CD8-positive, alpha-beta T cell (primary cell): ENCODE measurements at regions of chr12 and their contacts with region 1.

Region 1: DNA sequence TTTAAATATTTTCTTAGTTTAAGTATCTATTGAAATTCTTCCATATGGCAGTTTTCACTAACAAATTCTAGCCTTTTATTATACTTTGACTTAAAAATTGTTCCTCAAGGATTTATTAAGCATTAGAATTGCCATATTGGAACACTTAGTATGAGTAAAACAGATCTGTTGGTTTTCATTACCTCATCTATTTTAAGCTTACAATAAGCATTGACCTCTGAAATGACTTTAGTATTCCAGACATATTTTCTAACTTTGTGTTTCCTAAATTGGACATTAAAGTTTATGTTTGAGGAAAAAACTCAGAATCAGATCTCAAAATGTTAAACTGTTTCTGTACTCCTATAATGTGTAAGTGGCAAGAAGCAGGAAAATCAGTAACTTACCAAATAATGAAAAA is 48.4 kb downstream of the CSRP2 start:
- DNase-seq: no peak
- ATAC-seq: no peak
- H3K4me3 ChIP-seq: no peak overlapping the region
- H3K4me3 Mint-ChIP-seq: no peak overlapping the region
- H3K27ac ChIP-seq: no peak overlapping the region
- H3K27ac Mint-ChIP-seq: no peak overlapping the region
- H3K4me1 ChIP-seq: no peaks in the 10 kb centered on the region
- H3K4me1 Mint-ChIP-seq: no peaks in the 10 kb centered on the region
- H3K27me3 ChIP-seq: no peaks in the 10 kb centered on the region
- H3K27me3 Mint-ChIP-seq: no peaks in the 10 kb centered on the region
- CTCF ChIP-seq: no peak

Region 2: GRCh38 chr12:76813972-76814371 is 16.5 kb before region 1 on chr12:
- CTCF ChIA-PET with region 1: no interaction called
- POLR2A ChIA-PET with region 1: no interaction called
- intact Hi-C with region 1: loop called in 1 of 2 experiments (anchors 2 kb)
- DNase-seq: no peak
- ATAC-seq: no peak
- H3K4me3 ChIP-seq: no peak overlapping the region
- H3K4me3 Mint-ChIP-seq: no peak overlapping the region
- H3K27ac ChIP-seq: no peak overlapping the region
- H3K27ac Mint-ChIP-seq: no peak overlapping the region
- H3K4me1 ChIP-seq: no peaks in the 10 kb centered on the region
- H3K4me1 Mint-ChIP-seq: no peaks in the 10 kb centered on the region
- H3K27me3 ChIP-seq: no peaks in the 10 kb centered on the region
- H3K27me3 Mint-ChIP-seq: no peaks in the 10 kb centered on the region
- CTCF ChIP-seq: no peak

Region 3: DNA sequence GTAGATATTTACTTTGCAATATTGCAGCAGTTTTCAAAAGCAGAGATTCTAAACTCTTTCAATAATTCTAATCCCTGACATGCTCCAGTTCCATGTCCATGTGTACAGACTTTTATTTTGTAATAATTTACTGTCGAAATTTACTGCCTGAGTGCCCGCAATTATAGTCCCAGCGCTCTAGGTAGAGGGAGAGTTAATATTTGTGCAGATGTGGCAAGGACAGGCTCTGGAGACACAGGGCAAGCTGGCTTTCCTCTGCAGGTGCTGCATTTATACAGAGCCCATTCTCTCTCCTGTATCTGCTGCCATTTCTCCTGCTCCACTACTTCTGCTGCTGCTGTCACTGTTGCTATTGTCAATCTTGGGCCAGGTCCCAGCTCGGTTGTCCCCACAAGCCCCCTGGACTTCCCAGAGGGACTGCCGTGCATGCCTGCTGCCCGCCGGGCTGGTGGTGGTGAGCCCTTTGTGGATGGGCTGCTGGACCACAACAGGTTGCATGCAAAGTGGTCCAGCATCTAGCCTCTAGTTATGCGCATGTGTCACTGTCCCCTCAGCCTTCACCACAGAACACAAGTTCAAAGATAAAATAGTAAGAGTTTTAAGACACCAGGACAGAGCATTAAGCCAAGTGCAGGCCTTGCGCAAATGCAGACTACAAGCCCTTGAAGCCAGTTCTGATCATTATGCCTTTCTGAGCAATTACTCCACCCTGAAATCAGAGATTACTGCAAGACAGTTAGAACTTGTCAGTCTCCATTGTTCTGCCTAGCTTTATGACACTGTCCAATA is 89.1 kb after region 1 on chr12:
- CTCF ChIA-PET with region 1: no interaction called
- POLR2A ChIA-PET with region 1: no interaction called
- intact Hi-C with region 1: no loop called
- DNase-seq: no peak
- ATAC-seq: no peak
- H3K4me3 ChIP-seq: no peak overlapping the region
- H3K4me3 Mint-ChIP-seq: no peak overlapping the region
- H3K27ac ChIP-seq: no peak overlapping the region
- H3K27ac Mint-ChIP-seq: no peak overlapping the region
- H3K4me1 ChIP-seq: no peaks in the 10 kb centered on the region
- H3K4me1 Mint-ChIP-seq: peaks cover 4% of the 10 kb centered on the region
- H3K27me3 ChIP-seq: no peaks in the 10 kb centered on the region
- H3K27me3 Mint-ChIP-seq: no peaks in the 10 kb centered on the region
- CTCF ChIP-seq: no peak